ENCODE measurements at regions of chr16 and their contacts with region 1.

Region 1: DNA sequence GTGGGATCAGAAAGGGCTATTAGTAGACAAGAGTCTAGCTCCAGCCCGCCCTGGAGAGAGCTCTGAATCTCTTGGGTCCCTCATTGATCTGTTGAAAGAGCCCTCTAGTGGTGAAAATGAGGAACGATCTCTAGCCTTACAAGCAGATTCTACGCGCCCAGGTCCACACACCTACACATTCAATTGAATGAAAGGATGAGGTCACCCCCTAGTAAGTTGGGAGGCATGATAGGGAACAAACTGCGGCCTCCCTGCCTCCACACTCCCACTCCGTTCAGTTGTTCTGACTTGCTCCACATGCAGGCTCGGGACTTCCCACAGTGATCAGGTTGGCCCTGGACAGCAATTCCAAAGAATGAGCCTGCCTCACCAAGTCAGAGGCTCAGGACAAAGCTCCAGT is 2.9 kb upstream of the CACNG3 start:
- H3K4me3 Mint-ChIP-seq: no peak overlapping the region
- H3K27ac Mint-ChIP-seq: no peak overlapping the region
- H3K4me1 Mint-ChIP-seq: no peaks in the 10 kb centered on the region
- H3K27me3 Mint-ChIP-seq: peaks cover 47% of the 10 kb centered on the region

Region 2: DNA sequence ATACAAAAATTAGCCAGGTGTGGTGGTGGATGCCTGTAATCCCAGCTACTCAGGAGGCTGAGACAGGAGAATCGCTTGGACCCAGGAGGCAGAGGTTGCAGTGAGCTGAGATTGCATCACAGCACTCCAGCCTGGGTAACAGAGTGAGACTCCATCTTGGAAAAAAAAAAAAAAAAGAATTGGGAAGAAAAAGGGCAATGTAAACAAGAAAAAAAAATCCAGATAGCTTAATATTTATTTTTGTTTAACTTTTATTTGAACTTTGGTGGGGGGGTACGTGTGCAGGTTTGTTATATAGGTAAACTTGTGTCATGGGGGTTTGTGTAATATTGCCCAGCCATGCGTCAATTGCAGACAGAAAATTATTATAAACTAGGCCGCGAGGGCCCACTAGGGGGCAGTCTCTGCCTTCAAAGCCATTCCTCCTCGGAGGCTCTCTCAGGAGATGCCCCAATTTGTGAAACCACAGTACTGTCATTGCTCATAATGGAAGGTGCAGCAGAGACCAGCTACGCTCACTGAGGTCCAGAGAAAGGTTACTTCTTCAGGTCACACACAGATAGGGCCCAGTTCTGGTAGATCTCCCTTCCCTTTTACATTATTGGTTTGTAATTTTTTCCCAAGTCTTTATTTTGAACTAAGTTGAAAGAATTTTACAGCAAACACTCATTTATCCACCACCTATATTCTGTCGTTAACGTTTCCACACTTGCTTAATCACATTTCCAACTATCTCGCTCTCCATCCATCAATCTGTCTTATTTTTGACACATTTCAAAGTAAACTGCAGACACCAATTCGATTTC is 211.2 kb before region 1 on chr16:
- intact Hi-C with region 1: loop called (anchors 1 kb)
- H3K4me3 Mint-ChIP-seq: no peak overlapping the region
- H3K27ac Mint-ChIP-seq: no peak overlapping the region
- H3K4me1 Mint-ChIP-seq: no peaks in the 10 kb centered on the region
- H3K27me3 Mint-ChIP-seq: no peaks in the 10 kb centered on the region

Measured in dendritic cell treated with granulocyte-macrophage colony-stimulating factor and Interleukin-4, amounts not matched to agents 40 ng/mL and 50 ng/mL, for 4 days (primary cell).